Left ventricle myocardium inferior (tissue), 1 donor: ENCODE measurements at regions of chr2 and their contacts with region 1.

Region 1: GRCh38 chr2:46650556-46651001 is 171.2 kb downstream of the TMEM247 start:
- DNase-seq: no peak
- H3K4me3 ChIP-seq: no peak overlapping the region
- H3K27ac ChIP-seq: no peak overlapping the region
- H3K4me1 ChIP-seq: peaks cover 4% of the 10 kb centered on the region
- H3K27me3 ChIP-seq: no peaks in the 10 kb centered on the region
- CTCF ChIP-seq: peak; percentile 97

Region 2: GRCh38 chr2:46521215-46521683 is 129.3 kb before region 1 on chr2:
- intact Hi-C with region 1: no loop called
- DNase-seq: peak; percentile 77
- H3K4me3 ChIP-seq: no peak overlapping the region
- H3K27ac ChIP-seq: peak overlapping the region; percentile 73
- H3K4me1 ChIP-seq: peaks cover 31% of the 10 kb centered on the region
- H3K27me3 ChIP-seq: no peaks in the 10 kb centered on the region
- CTCF ChIP-seq: no peak

Region 3: DNA sequence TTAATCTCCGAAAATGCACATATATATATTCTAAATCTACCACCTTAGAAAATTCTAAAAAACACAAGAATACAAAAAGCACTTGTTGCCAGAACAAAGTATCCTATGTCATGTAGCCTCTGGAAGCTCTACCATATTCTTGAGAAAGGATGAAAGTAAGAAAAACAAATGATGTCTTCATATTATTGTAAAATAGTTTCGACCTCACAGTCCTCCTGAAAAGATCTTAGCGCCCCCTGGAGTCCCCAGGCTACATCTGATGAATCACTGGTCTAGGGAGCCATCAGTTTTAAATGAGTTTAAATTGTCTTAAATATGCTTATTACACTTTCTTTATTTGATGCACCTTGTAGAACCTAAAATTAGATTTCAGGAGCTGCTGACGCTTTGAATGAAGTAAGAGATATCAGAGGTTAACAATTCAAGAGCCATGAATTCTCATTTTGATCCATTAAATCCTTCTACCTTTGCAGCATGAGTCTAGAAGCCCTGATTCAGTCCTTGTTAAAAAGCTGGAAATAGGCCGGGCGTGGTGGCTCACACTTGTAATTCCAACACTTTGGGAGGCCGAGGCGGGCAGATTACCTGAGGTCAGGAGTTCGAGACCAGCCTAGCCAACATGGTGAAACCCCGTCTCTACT is 126.2 kb after region 1 on chr2:
- intact Hi-C with region 1: loop called (anchors 10 kb)
- DNase-seq: peak; percentile 36
- H3K4me3 ChIP-seq: no peak overlapping the region
- H3K27ac ChIP-seq: no peak overlapping the region
- H3K4me1 ChIP-seq: peaks cover 37% of the 10 kb centered on the region
- H3K27me3 ChIP-seq: no peaks in the 10 kb centered on the region
- CTCF ChIP-seq: peak; percentile 74

Region 4: GRCh38 chr2:47357483-47357882 is 706.9 kb after region 1 on chr2:
- intact Hi-C with region 1: no loop called
- DNase-seq: no peak
- H3K4me3 ChIP-seq: no peak overlapping the region
- H3K27ac ChIP-seq: no peak overlapping the region
- H3K4me1 ChIP-seq: peaks cover 6% of the 10 kb centered on the region
- H3K27me3 ChIP-seq: no peaks in the 10 kb centered on the region
- CTCF ChIP-seq: no peak